Right ventricle myocardium superior (tissue), 1 donor: ENCODE measurements at regions of chr7 and their contacts with region 1.

Region 1: GRCh38 chr7:25851332-25852210 is 300.4 kb upstream of the NFE2L3 start:
- DNase-seq: peak; percentile 87
- ATAC-seq: peak; percentile 84

Region 2: DNA sequence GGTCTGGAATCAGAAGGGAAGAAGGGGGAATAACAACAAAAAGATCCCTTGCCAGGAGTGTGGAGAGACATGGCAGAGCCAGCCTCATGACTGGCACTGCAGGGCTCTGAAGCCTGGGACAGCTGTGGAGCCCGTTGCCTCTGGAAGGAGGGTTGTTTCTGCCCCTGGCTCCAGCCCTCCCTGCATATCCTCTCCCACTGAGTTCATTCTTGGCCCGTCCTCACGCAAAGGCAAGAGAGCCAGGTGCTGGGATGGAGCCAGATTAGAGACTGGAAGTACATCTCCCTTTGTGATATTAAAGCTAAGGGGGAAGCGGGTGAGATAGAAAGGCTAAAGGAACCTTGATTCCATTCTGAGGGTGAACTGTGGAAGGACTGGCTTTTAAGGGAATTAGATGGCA is 481.8 kb before region 1 on chr7:
- intact Hi-C with region 1: no loop called
- DNase-seq: peak; percentile 65
- ATAC-seq: peak; percentile 88

Region 3: GRCh38 chr7:25389489-25390106 is 462.0 kb before region 1 on chr7:
- intact Hi-C with region 1: loop called (anchors 2 kb)
- DNase-seq: no peak
- ATAC-seq: peak; percentile 42

Region 4: GRCh38 chr7:25515633-25516275 is 335.8 kb before region 1 on chr7:
- intact Hi-C with region 1: no loop called
- DNase-seq: no peak
- ATAC-seq: no peak